PC-9 (cell line): ENCODE measurements at regions of chr1 and their contacts with region 1.

Region 1: GRCh38 chr1:221886743-221887413 is 145.0 kb upstream of the DUSP10 start:
- DNase-seq: peak; percentile 97 to 99
- H3K4me3 ChIP-seq: no peak overlapping the region; the same call in 1 of the 2 replicates
- H3K27ac ChIP-seq: peak overlapping the region; percentile 84
- H3K4me1 ChIP-seq: peaks cover 47% of the 10 kb centered on the region
- H3K27me3 ChIP-seq: no peaks in the 10 kb centered on the region
- CTCF ChIP-seq: no peak

Region 2: DNA sequence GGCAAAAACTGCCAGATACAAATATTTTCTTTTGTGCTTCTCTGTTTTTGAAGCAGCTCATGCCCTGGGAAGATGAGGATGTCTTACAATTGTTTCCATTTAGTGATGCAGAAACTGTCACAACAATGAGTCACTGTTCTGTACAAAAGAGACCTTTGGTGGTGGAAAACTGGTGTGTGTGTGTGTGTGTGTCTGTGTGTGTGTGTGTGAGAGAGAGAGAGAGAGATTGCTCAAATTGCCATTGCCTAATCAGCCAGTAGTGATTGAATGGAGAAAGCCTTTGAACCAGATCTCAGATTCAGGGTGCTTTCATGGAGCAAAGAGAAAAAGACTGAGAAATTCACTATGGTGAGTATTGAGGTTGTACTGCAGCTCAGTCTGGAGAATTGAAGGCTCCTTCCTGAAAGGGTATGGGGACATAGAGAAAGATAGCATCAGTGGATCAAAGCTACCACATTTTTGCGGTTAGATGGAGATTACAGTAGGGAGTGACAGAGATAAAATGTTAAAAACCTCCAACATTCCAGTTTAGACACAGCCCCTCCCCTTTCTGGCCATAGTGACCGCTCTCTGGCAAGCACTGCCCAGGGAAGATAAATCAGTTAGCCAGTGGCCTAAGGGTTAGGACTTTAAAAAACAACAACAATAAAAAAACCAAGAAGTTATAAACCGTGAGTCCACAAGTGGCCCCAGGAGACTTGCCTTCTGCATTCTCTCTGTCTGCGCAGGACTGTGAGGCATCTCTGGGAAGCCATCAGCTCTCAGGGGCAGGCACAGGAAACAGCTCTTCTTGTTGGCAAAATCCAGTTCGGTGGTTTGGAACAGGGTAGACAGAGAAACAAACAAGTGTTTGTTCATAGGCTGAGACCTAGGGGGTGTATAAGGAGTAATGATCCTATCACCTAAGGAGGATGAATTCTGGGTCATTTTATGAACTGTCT is 551.4 kb before region 1 on chr1:
- CTCF ChIA-PET with region 1: no interaction called
- POLR2A ChIA-PET with region 1: no interaction called
- intact Hi-C with region 1: loop called (anchors 1 kb)
- DNase-seq: peak; percentile 82 to 90
- H3K4me3 ChIP-seq: no peak overlapping the region
- H3K27ac ChIP-seq: peak overlapping the region; percentile 67
- H3K4me1 ChIP-seq: peaks cover 29% of the 10 kb centered on the region
- H3K27me3 ChIP-seq: no peaks in the 10 kb centered on the region
- CTCF ChIP-seq: no peak

Region 3: DNA sequence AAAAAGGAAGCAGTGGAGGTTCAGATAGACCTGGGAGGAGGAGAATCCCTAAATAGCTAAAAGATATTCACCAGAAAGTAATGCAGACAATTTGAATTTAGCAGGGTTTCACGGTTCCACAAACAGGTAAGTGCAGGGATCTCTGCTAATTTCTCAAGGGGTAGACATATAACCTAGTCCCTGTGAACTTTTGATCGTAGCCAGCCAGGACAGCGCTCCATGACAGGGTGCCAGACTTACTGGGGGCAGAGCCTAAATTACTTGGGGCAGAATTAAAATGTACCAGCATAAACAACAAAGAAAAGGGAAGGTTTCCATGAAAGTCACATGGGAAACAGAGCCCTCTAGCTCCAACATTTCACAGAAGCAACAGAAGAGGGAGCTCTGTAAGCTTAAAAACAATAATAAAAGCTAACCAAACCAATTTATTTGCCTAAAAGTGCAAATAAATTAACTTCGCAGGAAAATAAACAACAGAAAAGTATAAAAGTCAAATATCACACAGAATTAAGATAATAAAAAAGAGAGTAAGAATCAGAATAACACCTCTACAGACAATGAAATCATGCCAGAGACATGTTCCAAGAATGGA is 343.3 kb before region 1 on chr1:
- CTCF ChIA-PET with region 1: no interaction called
- POLR2A ChIA-PET with region 1: no interaction called
- intact Hi-C with region 1: loop called (anchors 10 kb)
- DNase-seq: peak in 1 of 2 experiments; percentile 3
- H3K4me3 ChIP-seq: no peak overlapping the region
- H3K27ac ChIP-seq: no peak overlapping the region
- H3K4me1 ChIP-seq: no peaks in the 10 kb centered on the region
- H3K27me3 ChIP-seq: no peaks in the 10 kb centered on the region
- CTCF ChIP-seq: peak; percentile 67

Region 4: DNA sequence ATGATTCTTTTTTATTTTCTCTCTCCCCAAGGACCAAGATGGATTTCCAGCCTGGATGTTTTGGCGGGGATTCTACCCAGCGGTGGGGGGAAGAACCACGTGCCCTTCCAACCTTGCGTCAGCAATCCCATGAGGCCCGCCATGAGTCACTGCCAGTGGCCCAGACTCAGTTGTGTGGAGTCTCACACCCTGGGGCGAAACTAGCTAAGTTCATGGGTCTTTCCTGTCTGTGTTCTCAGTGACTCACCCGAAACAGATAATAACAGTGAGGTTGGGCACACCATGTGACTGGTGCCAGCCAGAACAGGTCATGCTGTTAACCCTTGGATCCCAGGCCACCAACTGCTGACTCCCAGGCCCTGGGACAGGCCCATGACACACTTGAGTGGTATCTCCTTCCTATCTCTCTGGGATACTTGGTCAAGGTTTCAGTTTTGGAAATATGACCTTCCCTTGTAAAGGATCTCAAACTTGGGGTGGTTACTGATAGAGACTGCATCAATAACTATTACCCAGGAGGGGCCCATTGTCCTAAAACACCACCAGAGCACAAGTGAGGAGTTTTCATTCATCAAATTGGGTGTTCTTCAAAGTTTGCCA is 47.0 kb before region 1 on chr1:
- CTCF ChIA-PET with region 1: interaction called, 3 read pairs
- POLR2A ChIA-PET with region 1: no interaction called
- intact Hi-C with region 1: loop called (anchors 1 kb)
- DNase-seq: peak; percentile 81 to 96
- H3K4me3 ChIP-seq: no peak overlapping the region
- H3K27ac ChIP-seq: peak overlapping the region; percentile 87
- H3K4me1 ChIP-seq: peaks cover 35% of the 10 kb centered on the region
- H3K27me3 ChIP-seq: no peaks in the 10 kb centered on the region
- CTCF ChIP-seq: no peak

Region 5: GRCh38 chr1:222009105-222009730 is 122.3 kb after region 1 on chr1:
- CTCF ChIA-PET with region 1: no interaction called
- POLR2A ChIA-PET with region 1: no interaction called
- intact Hi-C with region 1: loop called (anchors 1 kb)
- DNase-seq: peak in 1 of 2 experiments; percentile 19
- H3K4me3 ChIP-seq: no peak overlapping the region
- H3K27ac ChIP-seq: no peak overlapping the region
- H3K4me1 ChIP-seq: peaks cover 4% of the 10 kb centered on the region
- H3K27me3 ChIP-seq: no peaks in the 10 kb centered on the region
- CTCF ChIP-seq: peak; percentile 56

Region 6: GRCh38 chr1:222288040-222288439 is 401.2 kb after region 1 on chr1:
- CTCF ChIA-PET with region 1: no interaction called
- POLR2A ChIA-PET with region 1: no interaction called
- intact Hi-C with region 1: loop called (anchors 2 kb)
- DNase-seq: peak; percentile 77 to 87
- H3K4me3 ChIP-seq: peak overlapping the region; percentile 3; the same call in 1 of the 2 replicates
- H3K27ac ChIP-seq: peak overlapping the region; percentile 67
- H3K4me1 ChIP-seq: peaks cover 39% of the 10 kb centered on the region
- H3K27me3 ChIP-seq: no peaks in the 10 kb centered on the region
- CTCF ChIP-seq: no peak